ENCODE measurements at regions of chr6 and their contacts with region 1.

Region 1: GRCh38 chr6:78324213-78324612 is 543.1 kb upstream of the IRAK1BP1 start:
- DNase-seq: no peak
- H3K4me3 ChIP-seq: no peak overlapping the region
- H3K27ac ChIP-seq: no peak overlapping the region
- H3K4me1 ChIP-seq: no peaks in the 10 kb centered on the region
- H3K27me3 ChIP-seq: no peaks in the 10 kb centered on the region
- CTCF ChIP-seq: no peak
- EP300 ChIP-seq: no peak
- POLR2A ChIP-seq: no peak

Region 2: DNA sequence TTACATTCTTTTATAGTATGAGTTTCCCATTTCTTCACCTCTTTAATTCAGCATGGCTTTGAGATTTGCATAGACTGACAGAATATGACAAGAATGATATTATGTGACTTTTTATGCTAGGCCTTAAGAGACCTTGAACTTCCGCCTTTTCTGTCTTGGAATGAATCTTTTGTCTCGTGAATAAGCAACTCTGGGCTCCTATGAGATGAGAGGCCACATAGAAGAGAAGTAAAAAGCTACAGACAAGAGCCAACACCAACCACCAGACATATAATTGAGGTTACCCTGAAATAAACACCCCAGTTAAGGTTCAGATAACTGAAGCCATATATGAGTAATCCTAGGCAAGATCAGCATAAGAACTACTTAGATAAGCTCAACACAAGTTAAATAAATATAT is 70.6 kb before region 1 on chr6:
- intact Hi-C with region 1: loop called (anchors 2 kb)
- DNase-seq: no peak
- H3K4me3 ChIP-seq: no peak overlapping the region
- H3K27ac ChIP-seq: no peak overlapping the region
- H3K4me1 ChIP-seq: no peaks in the 10 kb centered on the region
- H3K27me3 ChIP-seq: no peaks in the 10 kb centered on the region
- CTCF ChIP-seq: no peak
- EP300 ChIP-seq: no peak
- POLR2A ChIP-seq: no peak

Measured in esophagus muscularis mucosa (tissue), 4 donors.